Activated CD4-positive, alpha-beta T cell treated with anti-CD3 and anti-CD28 coated beads for 36 hours (primary cell): ENCODE measurements at regions of chr3 and their contacts with region 1.

Region 1: GRCh38 chr3:44761424-44762169 is at the starts of genes KIAA1143 and KIF15:
- DNase-seq: peak; percentile 99
- ATAC-seq: peak; percentile 94
- H3K4me3 Mint-ChIP-seq: peak within 1 kb of the TSS; percentile 88
- H3K27ac Mint-ChIP-seq: peak within 1 kb of the TSS; percentile 89
- H3K4me1 Mint-ChIP-seq: peaks cover 24% of the 10 kb centered on the region
- H3K27me3 Mint-ChIP-seq: no peaks in the 10 kb centered on the region
- total RNA-seq, gene KIAA1143: 40.2 to 74.1 TPM
- total RNA-seq, gene KIF15: 40.1 to 51.7 TPM

Region 2: GRCh38 chr3:43852066-43852465 is 909.5 kb before region 1 on chr3:
- CTCF ChIA-PET with region 1: no interaction called
- POLR2A ChIA-PET with region 1: no interaction called
- intact Hi-C with region 1: no loop called
- DNase-seq: no peak
- ATAC-seq: no peak
- H3K4me3 Mint-ChIP-seq: no peak overlapping the region
- H3K27ac Mint-ChIP-seq: no peak overlapping the region
- H3K4me1 Mint-ChIP-seq: no peaks in the 10 kb centered on the region
- H3K27me3 Mint-ChIP-seq: peaks cover 30% of the 10 kb centered on the region

Region 3: DNA sequence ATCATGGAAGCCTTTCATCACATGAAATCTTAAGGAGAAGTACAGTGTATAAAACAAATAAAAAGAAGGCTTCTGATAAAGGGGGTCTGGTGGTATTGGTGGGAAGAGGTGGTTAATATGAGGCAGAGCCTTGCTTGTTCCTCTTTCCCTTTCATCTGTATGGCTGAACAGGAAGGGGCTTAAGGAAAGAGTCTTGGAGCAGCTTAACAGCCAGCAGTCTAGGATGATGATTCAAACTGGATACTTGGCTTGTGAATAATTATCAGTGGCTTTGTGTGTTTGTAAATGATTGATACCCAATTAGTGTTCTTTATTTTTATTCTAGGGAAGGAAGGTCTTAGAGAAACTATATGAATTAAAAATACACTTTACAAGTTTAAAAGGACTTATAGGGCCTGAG is 452.1 kb before region 1 on chr3:
- CTCF ChIA-PET with region 1: no interaction called
- POLR2A ChIA-PET with region 1: no interaction called
- intact Hi-C with region 1: no loop called
- DNase-seq: no peak
- ATAC-seq: no peak
- H3K4me3 Mint-ChIP-seq: no peak overlapping the region
- H3K27ac Mint-ChIP-seq: no peak overlapping the region
- H3K4me1 Mint-ChIP-seq: no peaks in the 10 kb centered on the region
- H3K27me3 Mint-ChIP-seq: peaks cover 8% of the 10 kb centered on the region

Region 4: GRCh38 chr3:44477312-44478030 is 284.1 kb before region 1 on chr3 and contains the start of gene ZNF445:
- CTCF ChIA-PET with region 1: no interaction called
- POLR2A ChIA-PET with region 1: no interaction called
- intact Hi-C with region 1: loop called in 1 of 2 experiments (anchors 1 kb)
- DNase-seq: peak; percentile 87
- ATAC-seq: peak; percentile 89
- H3K4me3 Mint-ChIP-seq: peak within 1 kb of the TSS; percentile 75
- H3K27ac Mint-ChIP-seq: peak within 1 kb of the TSS; percentile 88
- H3K4me1 Mint-ChIP-seq: peaks cover 33% of the 10 kb centered on the region
- H3K27me3 Mint-ChIP-seq: no peaks in the 10 kb centered on the region
- total RNA-seq, gene ZNF445: 13.2 to 16.3 TPM

Region 5: DNA sequence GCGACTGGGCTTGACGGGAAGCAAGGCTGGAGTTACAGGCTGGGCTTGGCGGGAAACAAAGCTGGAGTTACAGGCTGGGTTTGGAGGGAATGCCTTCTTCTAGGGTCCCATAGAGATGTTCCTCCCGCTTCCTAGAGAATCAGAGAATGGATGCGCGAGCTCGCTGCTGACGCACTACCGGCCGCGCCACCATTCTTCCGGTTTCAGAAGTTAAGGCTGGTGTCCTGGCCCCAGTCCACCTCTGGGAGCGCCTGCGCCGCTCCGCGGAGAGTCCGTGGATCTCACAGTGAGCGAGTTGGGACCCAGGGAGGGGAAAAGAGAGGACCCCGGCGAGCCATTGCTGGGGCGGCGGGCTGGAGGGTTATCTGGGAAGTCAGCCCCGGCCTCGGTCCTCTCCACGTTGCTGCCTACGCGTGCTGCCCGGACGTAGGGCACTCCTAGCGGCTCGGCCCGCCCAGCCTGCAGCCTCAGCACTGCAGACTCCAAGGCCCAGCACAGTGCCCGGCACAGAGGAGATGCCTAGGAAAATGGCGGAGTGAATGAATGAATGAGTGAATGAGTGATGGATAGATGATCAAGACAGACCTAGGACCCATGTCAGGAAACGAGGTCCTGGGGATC is 49.0 kb before region 1 on chr3 and contains the start of gene ZNF502:
- CTCF ChIA-PET with region 1: no interaction called
- POLR2A ChIA-PET with region 1: no interaction called
- intact Hi-C with region 1: loop called in 1 of 2 experiments (anchors 1 kb)
- DNase-seq: peak; percentile 80
- ATAC-seq: peak; percentile 92
- H3K4me3 Mint-ChIP-seq: peak within 1 kb of the TSS; percentile 84
- H3K27ac Mint-ChIP-seq: peak within 1 kb of the TSS; percentile 77
- H3K4me1 Mint-ChIP-seq: peaks cover 17% of the 10 kb centered on the region
- H3K27me3 Mint-ChIP-seq: peaks cover 19% of the 10 kb centered on the region
- total RNA-seq, gene ZNF502: 1.8 to 2.4 TPM

Region 6: GRCh38 chr3:44729384-44729910 is 32.1 kb before region 1 on chr3 and contains the start of gene ZNF501:
- CTCF ChIA-PET with region 1: interaction called, 5 read pairs
- POLR2A ChIA-PET with region 1: interaction called, 5 read pairs
- intact Hi-C with region 1: loop called (anchors 1 kb)
- DNase-seq: peak; percentile 92
- ATAC-seq: peak; percentile 98
- H3K4me3 Mint-ChIP-seq: peak within 1 kb of the TSS; percentile 83
- H3K27ac Mint-ChIP-seq: peak within 1 kb of the TSS; percentile 80
- H3K4me1 Mint-ChIP-seq: peaks cover 13% of the 10 kb centered on the region
- H3K27me3 Mint-ChIP-seq: no peaks in the 10 kb centered on the region
- total RNA-seq, gene ZNF501: 1.7 to 2.0 TPM

Region 7: GRCh38 chr3:44825264-44825925 is 63.8 kb after region 1 on chr3:
- CTCF ChIA-PET with region 1: no interaction called
- POLR2A ChIA-PET with region 1: no interaction called
- intact Hi-C with region 1: no loop called
- DNase-seq: no peak
- ATAC-seq: no peak
- H3K4me3 Mint-ChIP-seq: no peak overlapping the region
- H3K27ac Mint-ChIP-seq: no peak overlapping the region
- H3K4me1 Mint-ChIP-seq: no peaks in the 10 kb centered on the region
- H3K27me3 Mint-ChIP-seq: no peaks in the 10 kb centered on the region

Region 8: GRCh38 chr3:44861412-44862220 is 100.0 kb after region 1 on chr3 and contains the start of gene TMEM42:
- CTCF ChIA-PET with region 1: no interaction called
- POLR2A ChIA-PET with region 1: no interaction called
- intact Hi-C with region 1: loop called (anchors 1 to 5 kb)
- DNase-seq: peak; percentile 91
- ATAC-seq: peak; percentile 96
- H3K4me3 Mint-ChIP-seq: peak within 1 kb of the TSS; percentile 78
- H3K27ac Mint-ChIP-seq: peak within 1 kb of the TSS; percentile 73
- H3K4me1 Mint-ChIP-seq: peaks cover 34% of the 10 kb centered on the region
- H3K27me3 Mint-ChIP-seq: no peaks in the 10 kb centered on the region
- total RNA-seq, gene TMEM42: 7.6 to 10.9 TPM